Activated naive CD4-positive, alpha-beta T cell treated with anti-CD3 and anti-CD28 coated beads for 36 hours (primary cell): ENCODE measurements at regions of chr2 and their contacts with region 1.

Region 1: DNA sequence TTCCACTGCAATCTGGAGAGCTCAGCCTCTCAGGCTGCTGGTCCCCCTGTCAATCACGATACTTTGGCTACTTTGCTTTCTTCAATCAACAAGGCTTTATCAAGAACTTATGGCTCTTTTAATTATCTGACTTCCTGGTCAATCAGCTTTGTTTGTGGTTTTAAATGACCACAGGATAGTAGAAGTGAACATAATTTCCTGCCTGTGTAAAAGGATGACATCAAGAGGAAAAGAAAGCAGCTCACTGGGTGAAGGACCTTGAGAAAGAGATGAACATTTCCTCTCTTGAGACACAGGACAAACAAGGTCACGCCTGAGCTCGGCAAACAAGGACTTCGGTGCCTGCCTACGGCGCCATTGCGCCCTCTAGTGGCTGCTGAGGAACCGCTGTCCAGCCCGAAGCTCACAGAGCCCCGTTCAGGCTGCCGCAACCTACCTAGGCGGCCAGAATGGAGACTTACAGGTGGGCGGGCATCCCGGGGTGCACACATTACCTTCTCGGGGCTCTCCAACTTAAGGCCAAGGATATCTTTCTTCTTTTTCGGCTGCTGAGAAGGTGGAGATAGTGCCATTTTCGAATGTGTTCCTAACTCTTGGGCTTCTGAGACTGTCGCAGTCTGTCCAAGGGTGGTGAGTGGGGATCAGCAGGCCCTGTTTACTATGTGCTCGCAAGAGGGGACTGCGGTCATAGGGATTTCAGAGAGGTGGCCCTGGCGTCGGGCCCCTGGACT is 54.0 kb downstream of the IL1RL2 start:
- DNase-seq: peak; percentile 92
- H3K4me3 Mint-ChIP-seq: no peak overlapping the region
- H3K27ac Mint-ChIP-seq: peak overlapping the region; percentile 7
- H3K4me1 Mint-ChIP-seq: peaks cover 31% of the 10 kb centered on the region
- H3K27me3 Mint-ChIP-seq: no peaks in the 10 kb centered on the region

Region 2: DNA sequence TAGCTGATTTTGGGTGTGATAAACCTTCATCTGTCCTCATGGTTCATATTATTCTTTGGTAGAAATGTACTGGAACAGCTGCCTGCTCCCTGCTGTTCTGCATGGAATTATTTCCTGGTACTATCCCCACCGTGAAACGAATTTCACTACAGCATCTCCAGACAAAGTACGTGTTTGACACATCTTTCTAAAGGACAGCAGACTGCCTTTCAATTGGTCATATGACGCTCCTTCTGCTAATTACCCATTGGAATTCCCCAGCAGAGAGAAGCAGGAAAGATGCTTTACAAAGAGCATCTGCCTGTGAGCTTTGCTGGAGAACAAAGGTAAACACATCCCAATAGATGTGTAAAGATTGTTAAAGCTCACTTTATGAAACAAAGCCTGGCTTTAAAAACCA is 761.5 kb before region 1 on chr2:
- CTCF ChIA-PET with region 1: no interaction called
- intact Hi-C with region 1: no loop called
- DNase-seq: no peak
- H3K4me3 Mint-ChIP-seq: no peak overlapping the region
- H3K27ac Mint-ChIP-seq: no peak overlapping the region
- H3K4me1 Mint-ChIP-seq: peaks cover 12% of the 10 kb centered on the region
- H3K27me3 Mint-ChIP-seq: peaks cover 8% of the 10 kb centered on the region

Region 3: GRCh38 chr2:101883863-101884262 is 356.9 kb before region 1 on chr2:
- CTCF ChIA-PET with region 1: interaction called, 59 read pairs
- intact Hi-C with region 1: loop called (anchors 1 kb)
- DNase-seq: peak; percentile 74
- H3K4me3 Mint-ChIP-seq: no peak overlapping the region
- H3K27ac Mint-ChIP-seq: peak overlapping the region; percentile 61
- H3K4me1 Mint-ChIP-seq: peaks cover 17% of the 10 kb centered on the region
- H3K27me3 Mint-ChIP-seq: no peaks in the 10 kb centered on the region

Region 4: GRCh38 chr2:102013206-102014040 is 227.4 kb before region 1 on chr2:
- CTCF ChIA-PET with region 1: interaction called, 54 read pairs
- intact Hi-C with region 1: no loop called
- DNase-seq: peak; percentile 44
- H3K4me3 Mint-ChIP-seq: no peak overlapping the region
- H3K27ac Mint-ChIP-seq: peak overlapping the region; percentile 69
- H3K4me1 Mint-ChIP-seq: peaks cover 37% of the 10 kb centered on the region
- H3K27me3 Mint-ChIP-seq: no peaks in the 10 kb centered on the region

Region 5: DNA sequence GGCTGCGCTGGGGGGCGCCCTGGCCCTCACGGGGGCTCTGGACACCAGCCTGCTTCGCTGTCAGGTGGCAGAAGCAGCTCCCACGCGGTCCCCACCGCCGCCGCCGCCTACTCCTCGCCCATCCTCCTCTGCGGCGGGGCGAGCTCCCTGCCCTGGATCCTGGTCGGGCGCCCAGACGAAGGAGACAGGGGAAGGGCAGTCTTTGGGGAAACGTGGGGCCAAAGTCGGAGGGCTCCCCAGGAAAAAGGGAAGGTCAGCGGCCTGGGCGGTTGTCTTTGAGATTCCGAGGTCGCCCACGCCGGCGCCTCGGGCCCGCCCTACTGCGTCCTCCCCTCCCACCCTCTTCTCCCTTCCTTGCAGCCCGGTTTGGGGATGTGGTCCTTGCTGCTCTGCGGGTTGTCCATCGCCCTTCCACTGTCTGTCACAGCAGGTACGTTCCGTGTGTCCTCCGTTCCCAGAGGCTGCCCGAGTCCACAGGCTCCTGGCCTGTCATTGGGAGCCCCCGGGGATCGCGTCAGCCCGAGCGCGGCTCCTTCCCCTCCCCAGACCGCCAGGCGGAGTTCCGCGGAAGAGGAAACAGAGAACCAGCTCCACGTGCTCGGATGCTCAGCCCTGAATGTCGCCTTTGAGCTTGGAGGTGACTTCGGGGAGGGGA is 53.2 kb before region 1 on chr2:
- CTCF ChIA-PET with region 1: interaction called, 23 read pairs
- intact Hi-C with region 1: loop called (anchors 1 kb)
- DNase-seq: peak; percentile 67
- H3K4me3 Mint-ChIP-seq: peak overlapping the region; percentile 70
- H3K27ac Mint-ChIP-seq: peak overlapping the region; percentile 57
- H3K4me1 Mint-ChIP-seq: peaks cover 21% of the 10 kb centered on the region
- H3K27me3 Mint-ChIP-seq: peaks cover 28% of the 10 kb centered on the region

Region 6: DNA sequence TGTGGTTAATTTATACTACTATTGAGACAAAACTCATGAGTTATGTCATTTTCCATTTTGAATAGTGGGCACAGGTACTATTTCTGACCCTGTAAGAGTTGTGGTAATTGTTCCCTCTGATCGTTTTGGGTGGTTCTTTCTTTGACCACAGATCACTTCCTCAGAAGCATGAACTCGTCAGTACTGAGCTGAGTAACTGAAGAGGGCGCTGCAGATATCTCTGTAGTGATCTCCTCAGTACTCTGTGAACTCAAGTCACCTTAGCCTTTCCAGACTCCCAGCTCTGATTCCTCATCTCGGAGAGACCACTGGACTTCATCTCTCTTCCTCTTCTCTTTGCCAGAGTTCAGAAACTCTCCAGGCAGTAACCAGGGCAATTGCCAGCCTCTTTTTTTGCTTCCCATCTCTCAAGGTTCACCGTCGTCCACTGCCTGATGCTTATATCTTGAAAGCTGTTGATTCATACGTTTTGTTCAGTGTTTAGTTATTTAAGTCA is 61.1 kb after region 1 on chr2:
- CTCF ChIA-PET with region 1: interaction called, 12 read pairs
- intact Hi-C with region 1: no loop called
- DNase-seq: peak; percentile 76
- H3K4me3 Mint-ChIP-seq: no peak overlapping the region
- H3K27ac Mint-ChIP-seq: no peak overlapping the region
- H3K4me1 Mint-ChIP-seq: peaks cover 35% of the 10 kb centered on the region
- H3K27me3 Mint-ChIP-seq: no peaks in the 10 kb centered on the region